ENCODE measurements at regions of chr22 and their contacts with region 1.

Region 1: DNA sequence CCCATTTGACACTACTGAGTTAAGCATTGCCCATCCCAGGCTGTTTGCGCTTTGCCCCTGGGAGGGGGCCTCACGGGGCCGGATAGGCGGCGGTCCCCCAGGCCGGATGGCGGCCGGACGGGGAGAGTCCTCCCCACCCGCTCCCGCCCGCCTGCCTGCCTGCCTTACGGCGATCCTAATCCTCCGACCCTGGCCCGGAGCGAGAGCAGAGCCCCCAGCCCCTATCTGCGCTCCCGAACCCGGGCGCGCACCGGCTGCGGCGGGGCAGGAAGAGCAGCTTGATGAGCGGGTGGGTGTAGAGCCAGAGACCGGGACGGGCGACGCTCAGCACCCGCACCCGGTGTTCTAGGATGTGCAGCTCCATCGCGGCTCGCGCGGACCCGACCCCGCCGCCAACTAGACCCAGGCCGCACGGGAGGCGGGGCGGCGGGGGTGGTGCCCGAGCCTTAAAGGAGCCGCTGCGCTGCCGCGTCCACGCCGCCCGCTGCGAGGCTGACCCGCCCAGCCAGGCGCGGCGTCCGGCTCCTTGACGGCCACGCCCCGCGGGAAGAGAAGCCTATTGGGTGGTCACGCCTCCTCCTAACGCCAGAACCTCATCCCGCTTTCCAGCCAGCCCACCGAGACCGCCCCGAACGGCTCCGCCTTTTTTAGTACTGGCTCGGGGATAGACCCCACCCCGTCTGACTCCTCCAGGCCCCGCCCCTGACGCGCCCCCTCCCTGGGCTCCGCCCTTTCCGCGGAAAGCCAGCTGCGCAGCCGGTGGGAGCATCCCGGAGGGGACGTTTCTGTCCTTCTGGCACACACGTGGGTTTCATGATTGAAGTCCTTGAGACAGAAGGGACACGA is at the start of gene CASTOR1:
- DNase-seq: peak; percentile 94
- H3K4me3 Mint-ChIP-seq: peak within 1 kb of the TSS; percentile 77
- H3K27ac Mint-ChIP-seq: peak within 1 kb of the TSS; percentile 81
- H3K4me1 Mint-ChIP-seq: peaks cover 61% of the 10 kb centered on the region
- H3K27me3 Mint-ChIP-seq: no peaks in the 10 kb centered on the region
- total RNA-seq, gene CASTOR1: 14.2 to 14.6 TPM

Region 2: DNA sequence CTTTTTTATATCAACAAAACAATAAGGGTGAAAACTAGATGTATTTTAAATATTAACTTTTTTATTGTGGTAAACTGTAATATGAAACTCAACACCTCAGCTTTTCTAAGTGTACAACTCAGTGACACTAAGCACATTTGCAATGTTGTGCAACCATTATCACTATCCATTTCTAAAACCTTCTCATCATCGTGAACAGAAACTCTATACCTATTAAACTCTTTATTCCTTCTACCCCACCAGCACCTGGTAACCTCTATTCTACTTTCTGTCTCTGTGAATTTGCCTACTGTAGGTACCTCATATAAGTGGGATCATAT is 199.7 kb before region 1 on chr22:
- CTCF ChIA-PET with region 1: interaction called, 10 read pairs
- POLR2A ChIA-PET with region 1: no interaction called
- DNase-seq: no peak
- H3K4me3 Mint-ChIP-seq: no peak overlapping the region
- H3K27ac Mint-ChIP-seq: no peak overlapping the region
- H3K4me1 Mint-ChIP-seq: peaks cover 28% of the 10 kb centered on the region
- H3K27me3 Mint-ChIP-seq: peaks cover 4% of the 10 kb centered on the region

Region 3: GRCh38 chr22:30262917-30263741 is 26.2 kb before region 1 on chr22:
- CTCF ChIA-PET with region 1: interaction called, 50 read pairs
- POLR2A ChIA-PET with region 1: interaction called, 253 read pairs
- DNase-seq: peak; percentile 81
- H3K4me3 Mint-ChIP-seq: peak overlapping the region; percentile 99
- H3K27ac Mint-ChIP-seq: peak overlapping the region; percentile 80
- H3K4me1 Mint-ChIP-seq: peaks cover 62% of the 10 kb centered on the region
- H3K27me3 Mint-ChIP-seq: no peaks in the 10 kb centered on the region

Region 4: DNA sequence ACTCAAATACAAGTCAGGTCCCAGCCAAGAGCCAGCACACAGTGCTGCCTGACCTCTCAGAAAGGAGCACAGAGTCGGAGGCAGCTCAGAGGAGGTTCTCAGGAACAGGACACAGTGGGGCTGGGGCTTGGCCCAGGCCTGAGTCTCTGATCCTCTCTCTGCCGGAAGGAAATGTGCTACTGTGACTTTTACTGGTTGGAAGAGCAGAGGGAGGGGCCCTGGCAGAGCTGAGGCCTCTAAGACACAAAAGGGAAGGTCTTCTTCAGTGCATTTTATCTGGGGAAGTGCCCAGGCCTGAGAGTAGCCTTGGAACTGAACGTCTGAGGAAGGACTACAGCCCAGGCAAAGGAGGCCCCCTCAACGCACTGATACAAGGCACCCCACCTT is 16.2 kb after region 1 on chr22:
- CTCF ChIA-PET with region 1: interaction called, 89 read pairs
- POLR2A ChIA-PET with region 1: interaction called, 86 read pairs
- DNase-seq: peak; percentile 79
- H3K4me3 Mint-ChIP-seq: peak overlapping the region; percentile 78
- H3K27ac Mint-ChIP-seq: peak overlapping the region; percentile 96
- H3K4me1 Mint-ChIP-seq: peaks cover 94% of the 10 kb centered on the region
- H3K27me3 Mint-ChIP-seq: no peaks in the 10 kb centered on the region

Region 5: GRCh38 chr22:30332561-30332960 is 43.2 kb after region 1 on chr22:
- CTCF ChIA-PET with region 1: interaction called, 13 read pairs
- POLR2A ChIA-PET with region 1: interaction called, 88 read pairs
- DNase-seq: no peak
- H3K4me3 Mint-ChIP-seq: no peak overlapping the region
- H3K27ac Mint-ChIP-seq: peak overlapping the region; percentile 71
- H3K4me1 Mint-ChIP-seq: peaks cover 43% of the 10 kb centered on the region
- H3K27me3 Mint-ChIP-seq: no peaks in the 10 kb centered on the region

Region 6: GRCh38 chr22:30356449-30357235 is 67.3 kb after region 1 on chr22 and contains the starts of genes CCDC157 and SF3A1:
- CTCF ChIA-PET with region 1: interaction called, 37 read pairs
- POLR2A ChIA-PET with region 1: interaction called, 47 read pairs
- DNase-seq: peak; percentile 90
- H3K4me3 Mint-ChIP-seq: peak within 1 kb of the TSS; percentile 92
- H3K27ac Mint-ChIP-seq: peak within 1 kb of the TSS; percentile 78
- H3K4me1 Mint-ChIP-seq: peaks cover 49% of the 10 kb centered on the region
- H3K27me3 Mint-ChIP-seq: no peaks in the 10 kb centered on the region
- total RNA-seq, gene CCDC157: 3.2 to 3.6 TPM
- total RNA-seq, gene SF3A1: 225 to 226 TPM

Region 7: DNA sequence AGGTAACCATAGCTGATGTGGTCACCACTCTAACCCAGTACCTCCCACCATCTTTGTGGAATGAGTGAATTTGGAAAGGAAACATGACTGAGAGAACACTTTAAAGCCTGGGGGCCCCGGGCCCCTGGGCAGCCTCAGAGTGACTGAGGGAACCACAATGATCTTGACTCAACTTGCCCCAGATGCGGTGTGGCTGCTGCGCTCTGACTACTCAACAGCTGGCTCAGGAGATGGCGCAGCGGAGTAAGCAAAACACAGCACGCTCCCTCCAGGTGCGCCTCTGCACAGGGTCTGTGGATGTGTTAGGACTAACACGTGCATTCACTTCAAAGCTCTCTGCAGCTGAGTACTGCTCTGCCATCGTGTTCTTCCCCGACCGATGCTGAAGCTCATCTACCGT is 91.9 kb after region 1 on chr22:
- CTCF ChIA-PET with region 1: interaction called, 59 read pairs
- POLR2A ChIA-PET with region 1: interaction called, 66 read pairs
- DNase-seq: no peak
- H3K4me3 Mint-ChIP-seq: no peak overlapping the region
- H3K27ac Mint-ChIP-seq: no peak overlapping the region
- H3K4me1 Mint-ChIP-seq: peaks cover 3% of the 10 kb centered on the region
- H3K27me3 Mint-ChIP-seq: no peaks in the 10 kb centered on the region

Region 8: GRCh38 chr22:30453731-30454510 is 164.6 kb after region 1 on chr22:
- CTCF ChIA-PET with region 1: no interaction called
- POLR2A ChIA-PET with region 1: no interaction called
- DNase-seq: peak; percentile 45
- H3K4me3 Mint-ChIP-seq: no peak overlapping the region
- H3K27ac Mint-ChIP-seq: no peak overlapping the region
- H3K4me1 Mint-ChIP-seq: peaks cover under 1% of the 10 kb centered on the region
- H3K27me3 Mint-ChIP-seq: peaks cover 10% of the 10 kb centered on the region